Naive thymus-derived CD4-positive, alpha-beta T cell (primary cell): ENCODE measurements at regions of chr2 and their contacts with region 1.

Region 1: DNA sequence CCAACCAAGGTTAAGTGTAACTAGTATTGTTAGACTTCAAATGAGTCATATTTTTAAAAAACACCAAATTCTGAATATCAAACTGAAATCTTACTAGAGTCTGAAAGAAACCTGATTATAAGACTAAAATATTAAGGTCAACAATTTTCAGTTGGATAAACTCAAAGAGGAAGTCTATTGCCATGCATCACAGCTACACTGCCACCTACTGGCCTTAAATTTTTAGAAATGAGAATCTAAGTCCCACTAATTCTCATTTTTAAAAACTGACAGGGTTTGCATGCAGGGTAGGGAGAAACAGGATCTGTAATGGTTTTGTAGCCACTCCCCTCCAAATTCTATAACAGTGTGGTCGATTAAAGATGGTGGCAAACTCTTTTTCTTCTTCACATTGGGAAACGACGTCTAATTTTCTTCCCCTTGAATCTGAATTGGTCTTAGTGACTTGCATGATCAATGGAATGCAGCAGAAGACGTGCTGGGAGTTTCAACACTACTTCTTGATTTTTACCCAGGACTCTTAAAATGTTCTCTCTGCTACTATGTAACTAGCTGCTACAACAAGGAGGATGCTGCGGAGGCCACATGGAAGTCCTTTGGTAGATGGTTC is 176.1 kb upstream of the SESTD1 start:
- DNase-seq: peak in 6 of 9 donors; percentile 10 to 40 (median 30)
- ATAC-seq: no peak
- H3K4me3 ChIP-seq: no peak overlapping the region
- H3K4me3 Mint-ChIP-seq: no peak overlapping the region
- H3K27ac ChIP-seq: no peak overlapping the region
- H3K27ac Mint-ChIP-seq: no peak overlapping the region
- H3K4me1 ChIP-seq: no peaks in the 10 kb centered on the region
- H3K4me1 Mint-ChIP-seq: no peaks in the 10 kb centered on the region
- H3K27me3 ChIP-seq: no peaks in the 10 kb centered on the region
- H3K27me3 Mint-ChIP-seq: peaks cover 13 to 39% (median 26%) of the 10 kb centered on the region in 5 donors

Region 2: GRCh38 chr2:178761759-178762371 is 678.9 kb before region 1 on chr2:
- CTCF ChIA-PET with region 1: interaction called, 3 read pairs
- POLR2A ChIA-PET with region 1: no interaction called
- intact Hi-C with region 1: loop called (anchors 1 to 2 kb)
- DNase-seq: peak in 6 of 9 donors; percentile 13 to 47 (median 38)
- ATAC-seq: peak; percentile 52
- H3K4me3 ChIP-seq: no peak overlapping the region
- H3K4me3 Mint-ChIP-seq: no peak overlapping the region
- H3K27ac ChIP-seq: no peak overlapping the region
- H3K27ac Mint-ChIP-seq: no peak overlapping the region
- H3K4me1 ChIP-seq: no peaks in the 10 kb centered on the region
- H3K4me1 Mint-ChIP-seq: peaks cover 0 to 2% (median 0%) of the 10 kb centered on the region in 7 donors
- H3K27me3 ChIP-seq: no peaks in the 10 kb centered on the region
- H3K27me3 Mint-ChIP-seq: no peaks in the 10 kb centered on the region

Region 3: DNA sequence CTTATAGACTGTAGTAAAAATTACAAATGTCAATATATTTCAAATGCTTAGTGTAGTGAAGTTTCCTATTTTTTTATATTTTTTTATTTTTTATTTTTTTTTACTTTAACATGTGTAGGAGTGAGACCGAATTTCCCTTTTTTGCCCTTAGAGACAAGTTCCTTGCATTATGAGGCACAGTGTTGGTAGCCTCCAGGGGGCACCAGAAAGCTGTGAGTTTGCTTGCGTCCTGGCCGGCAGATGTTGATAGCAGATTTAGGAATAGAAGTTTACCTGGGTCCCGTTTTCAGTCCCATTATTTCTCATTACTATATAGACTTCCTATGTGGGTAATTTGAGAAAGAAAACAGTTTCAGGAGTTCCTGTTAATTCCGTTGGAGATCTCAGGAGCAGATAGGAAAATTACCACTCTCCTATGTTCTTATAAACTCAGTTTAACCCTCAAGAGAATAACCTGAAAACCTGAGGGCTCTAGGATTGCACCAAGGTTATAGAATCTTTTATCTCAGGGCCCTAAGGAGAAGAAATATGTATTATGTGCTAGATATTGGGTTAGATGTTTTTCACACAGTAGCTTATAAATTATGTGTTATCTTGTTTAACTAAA is 18.6 kb before region 1 on chr2:
- CTCF ChIA-PET with region 1: no interaction called
- POLR2A ChIA-PET with region 1: no interaction called
- intact Hi-C with region 1: loop called in 1 of 2 experiments (anchors 2 kb)
- DNase-seq: peak in 3 of 9 donors; percentile 2 to 37 (median 3)
- ATAC-seq: peak; percentile 57
- H3K4me3 ChIP-seq: no peak overlapping the region
- H3K4me3 Mint-ChIP-seq: no peak overlapping the region
- H3K27ac ChIP-seq: no peak overlapping the region
- H3K27ac Mint-ChIP-seq: no peak overlapping the region
- H3K4me1 ChIP-seq: no peaks in the 10 kb centered on the region
- H3K4me1 Mint-ChIP-seq: peaks cover 0 to 2% (median 0%) of the 10 kb centered on the region in 7 donors
- H3K27me3 ChIP-seq: no peaks in the 10 kb centered on the region
- H3K27me3 Mint-ChIP-seq: peaks cover 8 to 36% (median 16%) of the 10 kb centered on the region in 5 donors

Region 4: GRCh38 chr2:179495315-179495714 is 54.6 kb after region 1 on chr2:
- CTCF ChIA-PET with region 1: no interaction called
- POLR2A ChIA-PET with region 1: no interaction called
- intact Hi-C with region 1: no loop called
- DNase-seq: no peak
- ATAC-seq: no peak
- H3K4me3 ChIP-seq: no peak overlapping the region
- H3K4me3 Mint-ChIP-seq: no peak overlapping the region
- H3K27ac ChIP-seq: no peak overlapping the region
- H3K27ac Mint-ChIP-seq: no peak overlapping the region
- H3K4me1 ChIP-seq: no peaks in the 10 kb centered on the region
- H3K4me1 Mint-ChIP-seq: no peaks in the 10 kb centered on the region
- H3K27me3 ChIP-seq: no peaks in the 10 kb centered on the region
- H3K27me3 Mint-ChIP-seq: peaks cover 0 to 24% (median 13%) of the 10 kb centered on the region in 5 donors